Endothelial cell of umbilical vein (primary cell): ENCODE measurements at regions of chr22 and their contacts with region 1.

Region 1: DNA sequence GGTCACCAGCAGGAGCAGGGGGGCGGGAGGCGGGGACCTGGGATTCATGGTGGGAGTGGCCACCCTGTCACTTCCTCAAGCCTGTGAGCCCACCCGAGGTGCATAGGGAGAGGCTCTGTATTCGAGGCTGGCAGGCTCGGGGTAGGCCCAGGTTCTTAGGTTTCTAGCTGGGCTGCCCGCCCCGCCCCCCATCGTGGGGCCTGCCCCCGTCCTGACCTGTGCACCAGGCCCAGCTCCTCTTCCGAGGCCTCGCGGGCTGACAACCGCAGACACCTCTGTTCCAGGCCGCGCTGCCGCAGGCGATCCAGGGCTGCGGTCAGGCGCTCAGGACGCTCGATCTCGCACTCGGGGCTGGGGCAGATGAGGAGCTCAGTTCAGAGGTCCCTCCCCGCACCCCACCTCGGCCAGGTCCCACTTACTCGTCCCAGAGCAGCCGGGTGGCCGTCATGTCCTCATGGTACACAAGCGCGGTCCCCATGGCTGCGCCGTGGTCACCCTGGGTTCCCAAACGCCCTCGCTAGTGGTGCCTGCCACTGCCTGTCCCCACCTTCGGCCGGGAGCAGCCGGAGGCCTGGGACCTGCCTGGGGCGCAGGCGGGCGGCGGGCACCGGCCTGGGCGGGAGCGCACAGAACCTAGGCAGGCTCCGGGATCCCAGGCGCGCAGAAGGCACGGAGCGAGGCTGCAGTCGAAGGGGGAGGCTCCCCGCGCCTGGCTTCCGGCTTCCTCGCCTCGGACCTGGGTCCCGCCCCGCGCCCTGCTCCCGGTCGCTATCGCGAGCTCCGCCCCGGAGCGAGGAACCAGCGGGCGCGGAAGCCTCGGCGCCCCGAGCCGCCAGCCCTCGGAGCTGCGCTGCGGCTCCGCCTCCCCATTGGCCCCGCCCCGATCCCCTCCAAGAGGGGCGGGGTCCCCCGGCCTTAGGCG is at the start of gene HDAC10:
- DNase-seq: peak; percentile 76
- H3K4me3 ChIP-seq: peak within 1 kb of the TSS; percentile 73 to 74 (median 74)
- H3K27ac ChIP-seq: peak within 1 kb of the TSS; percentile 26
- H3K4me1 ChIP-seq: peaks cover 13% of the 10 kb centered on the region
- H3K27me3 ChIP-seq: no peaks in the 10 kb centered on the region
- CTCF ChIP-seq: no peak
- POLR2A ChIP-seq: peak; percentile 68
- total RNA-seq, gene HDAC10: 42.4 and 47.0 TPM in 2 replicates

Region 2: DNA sequence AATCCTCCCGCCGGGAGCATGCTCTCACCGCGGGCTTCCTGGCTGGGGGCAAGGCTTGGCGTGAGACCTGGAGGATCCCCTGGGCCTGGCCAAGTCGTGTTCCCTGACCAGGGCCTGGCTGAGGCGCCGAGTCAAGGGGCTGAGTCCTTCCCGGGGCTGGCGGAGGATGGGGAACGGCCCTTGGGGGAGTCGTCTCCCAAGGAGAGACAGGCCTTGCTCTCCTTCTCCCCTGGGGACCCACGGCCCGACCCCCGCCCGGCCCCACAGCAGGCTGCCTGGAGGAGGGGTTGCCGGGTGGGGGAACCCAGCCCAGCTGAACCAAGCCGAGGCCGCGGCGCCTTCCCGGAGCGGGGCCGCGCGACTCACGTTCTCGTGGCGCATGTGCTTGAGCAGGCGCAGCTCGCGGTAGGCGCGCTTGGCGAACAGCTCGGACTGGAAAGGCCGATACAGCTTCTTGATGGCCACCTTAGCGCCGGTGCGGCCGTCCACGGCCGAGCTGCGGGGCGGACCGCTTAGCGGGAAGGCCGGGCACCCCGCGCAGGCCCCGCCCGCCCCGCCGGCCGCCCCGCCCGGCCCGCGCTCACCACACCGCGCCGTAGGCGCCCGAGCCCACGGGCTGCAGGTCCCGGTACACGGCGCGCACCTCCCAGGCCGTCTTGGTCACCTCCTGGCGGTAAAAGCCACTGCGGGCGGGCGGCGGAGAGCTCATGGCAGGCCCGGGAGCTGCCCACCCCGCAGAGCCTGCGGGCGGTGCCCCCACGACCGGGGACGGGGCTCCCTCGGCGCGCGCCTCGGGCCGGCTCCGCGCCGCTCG is 10.2 kb after region 1 on chr22:
- CTCF ChIA-PET with region 1: interaction called, 41 read pairs
- POLR2A ChIA-PET with region 1: no interaction called
- dilution Hi-C with region 1: no loop called
- intact Hi-C with region 1: no loop called
- DNase-seq: peak; percentile 54
- H3K4me3 ChIP-seq: peak overlapping the region; percentile 23 to 69 (median 49)
- H3K27ac ChIP-seq: peak overlapping the region; percentile 22
- H3K4me1 ChIP-seq: peaks cover 11% of the 10 kb centered on the region
- H3K27me3 ChIP-seq: no peaks in the 10 kb centered on the region
- CTCF ChIP-seq: no peak
- POLR2A ChIP-seq: no peak

Region 3: DNA sequence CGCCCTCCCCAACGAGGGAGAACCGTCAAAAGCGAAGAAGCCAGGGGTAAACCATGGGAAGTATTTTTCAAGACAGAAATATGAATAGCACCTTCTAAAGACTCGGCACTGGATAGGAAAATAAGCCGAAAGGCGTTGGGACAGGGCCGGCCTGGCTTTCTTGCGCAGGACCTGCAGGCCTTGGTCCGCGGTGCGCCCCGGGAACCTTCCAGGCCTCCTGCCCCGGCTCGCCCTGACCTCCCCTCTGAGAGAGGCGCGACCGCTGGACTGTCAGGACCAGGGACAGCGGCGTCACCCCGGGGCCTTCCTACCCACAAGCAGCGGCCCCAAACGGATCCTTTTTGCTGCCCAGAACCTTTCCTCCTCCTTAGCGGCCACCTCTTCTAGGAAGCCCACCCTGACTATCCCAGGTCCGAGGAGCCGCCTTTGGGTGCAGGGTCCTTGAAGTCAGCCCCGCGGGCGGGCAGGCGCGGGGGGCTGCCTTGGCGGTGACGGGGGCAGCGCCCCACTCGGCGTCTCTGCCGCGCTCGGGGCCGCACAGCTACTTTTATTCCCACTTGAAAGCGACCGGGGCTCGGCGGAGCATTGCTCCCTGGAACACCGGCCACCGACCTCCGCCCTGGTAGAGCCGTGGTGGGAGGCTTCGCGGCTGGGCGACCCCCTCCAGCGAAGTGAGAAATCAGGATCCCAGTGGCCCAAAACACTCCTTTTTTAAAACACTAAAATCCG is 20.0 kb after region 1 on chr22:
- CTCF ChIA-PET with region 1: interaction called, 40 read pairs
- POLR2A ChIA-PET with region 1: no interaction called
- dilution Hi-C with region 1: no loop called
- intact Hi-C with region 1: loop called (anchors 1 kb)
- DNase-seq: peak; percentile 61
- H3K4me3 ChIP-seq: peak overlapping the region; percentile 30 to 59 (median 42)
- H3K27ac ChIP-seq: no peak overlapping the region
- H3K4me1 ChIP-seq: peaks cover 12% of the 10 kb centered on the region
- H3K27me3 ChIP-seq: no peaks in the 10 kb centered on the region
- CTCF ChIP-seq: no peak
- POLR2A ChIP-seq: no peak

Region 4: GRCh38 chr22:50276143-50276542 is 25.3 kb after region 1 on chr22:
- CTCF ChIA-PET with region 1: interaction called, 13 read pairs
- POLR2A ChIA-PET with region 1: no interaction called
- dilution Hi-C with region 1: no loop called
- intact Hi-C with region 1: no loop called
- DNase-seq: peak; percentile 43
- H3K4me3 ChIP-seq: no peak overlapping the region
- H3K27ac ChIP-seq: no peak overlapping the region
- H3K4me1 ChIP-seq: peaks cover 6% of the 10 kb centered on the region
- H3K27me3 ChIP-seq: no peaks in the 10 kb centered on the region
- CTCF ChIP-seq: peak; percentile 38 to 50
- POLR2A ChIP-seq: no peak

Region 5: DNA sequence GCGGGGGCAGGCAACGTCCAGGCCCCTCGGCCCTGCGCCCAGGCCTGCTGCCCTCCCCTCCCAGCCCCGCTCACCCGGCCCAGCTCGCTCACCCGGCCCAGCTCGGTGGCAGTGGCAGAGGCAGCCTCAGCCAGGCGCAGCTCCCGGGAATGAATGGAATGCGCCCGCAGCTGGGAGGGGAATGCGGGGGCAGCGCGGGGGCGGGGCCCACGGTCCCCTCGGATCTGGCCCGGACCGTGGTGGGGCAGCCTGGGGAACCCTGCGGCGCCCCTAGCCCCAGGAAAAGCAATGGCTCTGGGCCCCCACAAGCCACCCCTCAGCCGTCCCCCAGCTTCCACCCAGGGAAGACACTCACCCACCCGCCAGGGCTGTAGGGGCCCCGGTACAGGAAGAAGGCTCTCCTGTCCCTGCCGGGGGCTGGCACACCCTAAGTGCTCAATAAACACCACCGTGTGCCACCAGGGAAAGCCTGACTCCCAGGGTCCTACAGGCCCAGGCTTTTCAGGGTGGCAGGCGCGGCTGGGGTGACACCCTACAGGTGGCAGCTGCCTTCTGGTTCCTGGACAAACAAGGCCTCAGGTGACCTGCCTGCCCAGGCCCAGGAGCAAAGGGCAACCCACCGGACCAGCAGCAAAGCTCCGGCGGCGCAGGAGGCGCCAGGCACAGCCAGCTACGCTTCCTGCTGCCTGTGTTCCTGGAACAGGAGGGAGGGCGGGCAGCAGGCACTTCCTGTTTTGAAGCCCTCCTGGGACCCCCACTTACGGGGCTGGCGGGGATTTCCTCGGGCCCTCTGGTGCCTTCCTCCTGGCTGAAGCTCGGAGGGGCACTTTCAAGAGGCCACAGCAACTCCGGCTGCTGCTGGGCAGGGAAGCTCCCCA is 42.9 kb after region 1 on chr22:
- CTCF ChIA-PET with region 1: interaction called, 10 read pairs
- POLR2A ChIA-PET with region 1: no interaction called
- dilution Hi-C with region 1: no loop called
- intact Hi-C with region 1: no loop called
- DNase-seq: peak; percentile 83
- H3K4me3 ChIP-seq: peak overlapping the region in 2 of 3 experiments; percentile 6 to 22
- H3K27ac ChIP-seq: peak overlapping the region; percentile 92
- H3K4me1 ChIP-seq: peaks cover 20% of the 10 kb centered on the region
- H3K27me3 ChIP-seq: no peaks in the 10 kb centered on the region
- CTCF ChIP-seq: peak in 1 of 2 donors; percentile 1
- POLR2A ChIP-seq: peak; percentile 9

Region 6: DNA sequence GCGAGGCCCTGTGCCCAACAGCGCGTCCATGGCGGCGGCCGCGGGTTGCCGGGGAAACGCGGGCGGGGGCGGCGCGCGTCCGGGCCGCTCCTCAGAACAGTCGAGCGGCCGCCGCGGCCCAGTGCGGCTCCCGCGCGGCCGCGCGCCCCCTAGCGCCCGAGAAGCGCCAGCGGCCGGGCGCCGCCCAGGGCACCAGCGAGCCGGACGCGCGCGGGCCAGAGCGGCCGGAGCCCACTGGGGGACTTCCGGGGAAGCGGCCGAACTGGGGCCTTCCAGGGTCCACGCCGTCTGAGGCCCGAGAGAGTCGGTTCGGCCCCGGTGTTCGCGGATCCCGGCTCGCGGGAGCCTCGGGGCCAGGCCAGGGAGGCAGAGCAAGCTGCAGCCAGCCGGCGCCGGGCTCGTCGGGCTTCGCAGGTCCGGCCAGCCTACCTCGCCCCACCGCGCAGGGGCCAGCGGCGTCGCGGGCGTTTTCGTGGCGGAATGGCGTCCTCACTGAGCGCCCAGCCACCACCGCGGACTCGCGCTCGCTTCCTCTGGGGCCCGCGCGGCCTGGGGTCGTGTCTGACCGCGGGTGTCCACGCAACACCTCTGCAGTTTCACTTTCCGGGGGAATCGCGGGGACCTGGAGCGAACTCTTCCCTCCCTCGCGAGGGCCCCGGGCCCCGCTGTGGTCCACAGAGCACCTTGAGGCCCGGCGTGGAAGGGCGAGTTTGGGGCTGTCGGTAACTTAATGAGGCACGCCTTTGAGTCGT is 76.3 kb after region 1 on chr22 and contains the start of gene DENND6B:
- CTCF ChIA-PET with region 1: interaction called, 30 read pairs
- POLR2A ChIA-PET with region 1: no interaction called
- dilution Hi-C with region 1: no loop called
- intact Hi-C with region 1: loop called (anchors 1 kb)
- DNase-seq: peak; percentile 64
- H3K4me3 ChIP-seq: peak within 1 kb of the TSS; percentile 16 to 58 (median 56)
- H3K27ac ChIP-seq: peak within 1 kb of the TSS; percentile 70
- H3K4me1 ChIP-seq: peaks cover 9% of the 10 kb centered on the region
- H3K27me3 ChIP-seq: no peaks in the 10 kb centered on the region
- CTCF ChIP-seq: peak; percentile 33 to 68
- POLR2A ChIP-seq: peak; percentile 89
- total RNA-seq, gene DENND6B: 2.9 and 5.9 TPM in 2 replicates

Region 7: GRCh38 chr22:50498322-50498890 is 247.6 kb after region 1 on chr22:
- CTCF ChIA-PET with region 1: interaction called, 12 read pairs
- POLR2A ChIA-PET with region 1: no interaction called
- dilution Hi-C with region 1: no loop called
- intact Hi-C with region 1: loop called (anchors 1 kb)
- DNase-seq: peak; percentile 65
- H3K4me3 ChIP-seq: no peak overlapping the region
- H3K27ac ChIP-seq: no peak overlapping the region
- H3K4me1 ChIP-seq: no peaks in the 10 kb centered on the region
- H3K27me3 ChIP-seq: no peaks in the 10 kb centered on the region
- CTCF ChIP-seq: peak; percentile 64 to 71
- POLR2A ChIP-seq: no peak